ENCODE measurements at regions of chr12 and their contacts with region 1.

Region 1: DNA sequence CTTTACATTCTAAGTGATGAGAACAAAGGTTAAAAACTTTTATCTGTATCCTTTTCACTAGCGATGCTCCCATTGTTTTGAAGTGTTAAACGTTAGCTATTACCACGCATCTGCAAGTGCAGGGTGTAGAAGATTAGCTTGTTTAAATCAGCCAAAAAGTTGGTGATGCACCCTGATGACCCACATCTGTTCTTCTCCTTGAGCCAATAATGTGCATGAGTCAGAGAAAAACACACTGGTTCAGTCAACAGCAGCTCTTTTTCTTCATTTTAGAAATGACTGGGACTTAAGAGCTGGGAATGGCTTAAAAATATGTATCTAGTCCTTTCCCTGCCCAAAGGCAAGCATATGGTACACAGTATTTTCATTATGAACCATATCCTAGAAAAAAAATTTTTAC is 323.5 kb upstream of the PDE3A start:
- DNase-seq: no peak
- H3K4me3 ChIP-seq: no peak overlapping the region
- H3K27ac ChIP-seq: peak overlapping the region; percentile 13 to 62
- H3K4me1 ChIP-seq: peaks cover 0 to 51% (median 6%) of the 10 kb centered on the region in 4 donors
- H3K27me3 ChIP-seq: no peaks in the 10 kb centered on the region
- CTCF ChIP-seq: no peak

Region 2: DNA sequence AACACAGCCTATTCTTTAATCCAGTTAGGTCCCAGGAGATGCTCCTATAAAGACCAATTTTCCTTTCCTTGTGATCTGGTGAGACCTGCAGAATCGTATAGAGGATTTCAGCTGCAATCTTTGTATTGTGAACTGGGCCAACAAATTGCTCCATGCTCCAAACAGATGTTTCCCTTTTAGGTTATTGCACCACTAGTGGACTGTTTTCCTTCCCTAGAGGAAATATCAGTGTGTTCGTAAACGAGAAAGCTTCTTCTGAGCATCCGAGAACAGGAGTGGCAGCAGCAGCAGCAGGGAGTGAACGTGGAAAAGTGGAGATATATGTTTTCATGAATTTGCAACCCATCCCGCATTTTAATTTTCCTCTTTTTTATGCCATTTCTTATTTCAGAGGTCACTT is 20.7 kb before region 1 on chr12:
- intact Hi-C with region 1: loop called (anchors 1 kb)
- DNase-seq: no peak
- H3K4me3 ChIP-seq: no peak overlapping the region
- H3K27ac ChIP-seq: no peak overlapping the region
- H3K4me1 ChIP-seq: no peaks in the 10 kb centered on the region
- H3K27me3 ChIP-seq: no peaks in the 10 kb centered on the region
- CTCF ChIP-seq: no peak

Region 3: GRCh38 chr12:20567413-20567812 is 522.6 kb after region 1 on chr12:
- intact Hi-C with region 1: no loop called
- DNase-seq: no peak
- H3K4me3 ChIP-seq: no peak overlapping the region
- H3K27ac ChIP-seq: peak overlapping the region; percentile 25 to 77
- H3K4me1 ChIP-seq: peaks cover 0 to 84% (median 10%) of the 10 kb centered on the region in 4 donors
- H3K27me3 ChIP-seq: no peaks in the 10 kb centered on the region
- CTCF ChIP-seq: no peak